BJ (cell line): ENCODE measurements at regions of chr7 and their contacts with region 1.

Region 1: GRCh38 chr7:135801045-135801693 is 52.6 kb upstream of the FAM180A start:
- DNase-seq: no peak
- H3K4me3 ChIP-seq: no peak overlapping the region
- H3K27me3 ChIP-seq: no peaks in the 10 kb centered on the region
- CTCF ChIP-seq: peak; percentile 80

Region 2: DNA sequence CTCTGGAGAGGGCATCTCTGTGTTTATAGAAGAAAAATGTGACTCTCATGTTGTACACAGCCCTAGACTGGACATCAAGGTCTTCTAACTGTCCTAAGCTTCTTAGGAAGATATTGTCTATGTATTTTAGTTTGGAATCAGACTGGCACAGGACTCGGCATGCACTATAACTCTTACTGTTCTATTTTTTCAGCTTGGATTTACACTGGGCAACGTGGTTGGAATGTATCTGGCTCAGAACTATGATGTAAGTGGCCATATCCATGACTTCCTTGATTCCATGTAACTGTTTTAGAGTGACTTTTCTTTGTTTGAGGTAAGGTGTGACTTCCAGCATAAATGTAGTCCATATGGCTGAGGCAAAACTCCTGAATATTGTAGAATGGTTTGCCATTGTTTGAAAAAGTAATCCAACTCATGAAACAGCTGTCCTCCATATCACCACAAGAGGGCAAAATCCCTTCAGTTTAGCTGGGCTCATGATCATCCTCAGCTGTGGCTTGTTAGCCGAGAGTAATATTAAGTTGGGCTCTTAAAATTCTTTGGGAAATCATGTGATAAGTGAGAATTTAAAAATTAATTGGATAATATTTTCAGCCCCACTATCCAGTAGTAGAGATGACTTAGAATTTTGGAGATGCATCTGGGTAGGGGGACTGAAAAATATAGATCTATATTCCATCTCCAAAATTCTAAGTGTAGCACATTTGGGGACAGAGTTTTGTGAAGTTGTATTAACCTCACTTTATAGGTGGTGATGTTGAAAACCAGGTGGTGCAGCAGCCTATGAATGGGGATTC is 128.4 kb before region 1 on chr7:
- CTCF ChIA-PET with region 1: interaction called, 112 read pairs
- POLR2A ChIA-PET with region 1: interaction called, 3 read pairs
- DNase-seq: no peak
- H3K4me3 ChIP-seq: no peak overlapping the region
- H3K27me3 ChIP-seq: no peaks in the 10 kb centered on the region
- CTCF ChIP-seq: peak; percentile 84

Region 3: DNA sequence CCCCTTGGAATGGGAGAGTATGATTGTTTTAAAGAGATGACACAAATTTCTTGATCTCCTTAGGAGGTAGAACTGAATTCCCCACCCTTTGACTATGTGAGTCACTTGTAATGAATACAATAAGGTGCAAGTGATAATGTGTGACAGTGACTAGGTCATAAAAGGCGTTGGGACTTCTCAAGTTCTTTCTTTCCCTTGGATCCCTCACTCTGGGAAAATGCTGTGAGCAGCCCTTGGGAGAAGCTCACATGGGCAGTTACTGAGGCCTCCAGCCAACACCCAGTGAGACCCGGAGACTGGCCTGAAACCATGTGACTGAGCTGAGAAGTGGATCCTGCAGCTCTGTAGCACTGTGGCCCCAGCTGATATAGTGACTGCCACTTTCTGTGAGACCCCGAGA is 13.9 kb after region 1 on chr7:
- CTCF ChIA-PET with region 1: interaction called, 11 read pairs
- POLR2A ChIA-PET with region 1: no interaction called
- DNase-seq: no peak
- H3K4me3 ChIP-seq: no peak overlapping the region
- H3K27me3 ChIP-seq: peaks cover 1% of the 10 kb centered on the region
- CTCF ChIP-seq: no peak

Region 4: GRCh38 chr7:135930565-135931461 is 129.6 kb after region 1 on chr7:
- CTCF ChIA-PET with region 1: no interaction called
- POLR2A ChIA-PET with region 1: no interaction called
- DNase-seq: peak; percentile 17
- H3K4me3 ChIP-seq: no peak overlapping the region
- H3K27me3 ChIP-seq: no peaks in the 10 kb centered on the region
- CTCF ChIP-seq: no peak

Region 5: GRCh38 chr7:136000288-136000913 is 199.2 kb after region 1 on chr7:
- CTCF ChIA-PET with region 1: interaction called, 10 read pairs
- POLR2A ChIA-PET with region 1: no interaction called
- DNase-seq: no peak
- H3K4me3 ChIP-seq: no peak overlapping the region
- H3K27me3 ChIP-seq: no peaks in the 10 kb centered on the region
- CTCF ChIP-seq: no peak

Region 6: DNA sequence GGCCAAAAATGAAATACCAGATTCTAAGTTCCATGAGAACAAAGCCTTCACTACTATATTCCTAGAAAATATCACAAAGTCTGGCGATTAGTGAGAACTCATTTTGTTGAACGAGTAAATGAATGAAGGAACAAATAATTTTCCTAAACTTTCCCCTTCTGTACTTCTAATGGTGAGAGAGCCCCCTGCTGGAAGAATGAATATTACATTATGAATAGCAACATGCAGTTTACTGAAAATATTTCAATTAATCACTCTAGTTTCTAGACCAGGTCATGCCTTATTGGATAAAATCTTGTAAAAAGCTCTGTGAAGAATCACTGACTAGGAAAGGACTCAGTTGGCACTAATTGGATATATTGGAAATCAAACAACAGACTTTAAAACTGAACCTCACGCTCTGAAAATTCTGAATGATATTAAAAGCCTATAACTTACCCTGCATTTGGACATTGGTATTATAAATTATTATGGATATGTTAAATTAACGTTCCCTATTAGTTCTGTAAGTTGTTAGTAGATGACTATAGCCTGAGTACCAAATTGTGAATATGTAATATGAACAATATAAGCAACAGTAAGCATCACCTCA is 208.4 kb after region 1 on chr7:
- CTCF ChIA-PET with region 1: interaction called, 59 read pairs
- POLR2A ChIA-PET with region 1: no interaction called
- DNase-seq: no peak
- H3K4me3 ChIP-seq: no peak overlapping the region
- H3K27me3 ChIP-seq: no peaks in the 10 kb centered on the region
- CTCF ChIP-seq: peak; percentile 56